Posterior cingulate gyrus (tissue), 11 donors: ENCODE measurements at regions of chr2 and their contacts with region 1.

Region 1: GRCh38 chr2:79670198-79670597 is 157.3 kb downstream of the CTNNA2 start:
- DNase-seq: no peak

Region 2: DNA sequence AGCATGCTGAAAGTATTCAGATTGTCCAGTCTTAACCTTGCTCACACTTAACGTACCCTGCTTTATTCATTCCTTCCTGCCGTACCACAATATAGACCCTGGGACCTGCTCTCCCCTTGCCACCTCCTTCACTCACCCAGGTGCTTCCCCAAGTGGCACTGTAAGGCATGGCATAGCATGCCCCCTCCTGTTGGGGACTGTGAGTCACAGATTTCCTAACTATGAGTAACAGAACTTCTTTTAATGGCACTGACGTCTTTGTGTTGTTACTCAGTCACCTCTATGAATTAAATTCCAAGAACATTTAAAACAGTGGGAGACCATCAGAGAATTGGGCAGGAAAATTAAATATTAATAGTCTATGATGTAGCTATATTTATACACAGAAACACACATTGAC is 40.1 kb before region 1 on chr2:
- intact Hi-C with region 1: loop called (anchors 2 kb)
- DNase-seq: peak in 1 of 10 donors; percentile 55